ENCODE measurements at regions of chr7 and their contacts with region 1.

Region 1: GRCh38 chr7:117993377-117994003 is 120.2 kb upstream of the CTTNBP2 start:
- DNase-seq: peak; percentile 46
- H3K4me3 ChIP-seq: no peak overlapping the region
- H3K27ac ChIP-seq: no peak overlapping the region
- H3K4me1 ChIP-seq: peaks cover 26% of the 10 kb centered on the region
- H3K27me3 ChIP-seq: no peaks in the 10 kb centered on the region
- CTCF ChIP-seq: peak; percentile 60 to 82

Region 2: GRCh38 chr7:117750612-117751563 is 242.6 kb before region 1 on chr7:
- CTCF ChIA-PET with region 1: interaction called, 3 read pairs
- dilution Hi-C with region 1: no loop called
- in situ Hi-C with region 1: no loop called
- intact Hi-C with region 1: loop called (anchors 10 kb)
- DNase-seq: no peak
- H3K4me3 ChIP-seq: no peak overlapping the region
- H3K27ac ChIP-seq: no peak overlapping the region
- H3K4me1 ChIP-seq: no peaks in the 10 kb centered on the region
- H3K27me3 ChIP-seq: no peaks in the 10 kb centered on the region
- CTCF ChIP-seq: peak; percentile 46 to 67

Region 3: GRCh38 chr7:118080947-118081346 is 87.5 kb after region 1 on chr7:
- CTCF ChIA-PET with region 1: interaction called, 3 read pairs
- dilution Hi-C with region 1: no loop called
- in situ Hi-C with region 1: no loop called
- intact Hi-C with region 1: loop called (anchors 5 kb)
- DNase-seq: peak; percentile 96
- H3K4me3 ChIP-seq: no peak overlapping the region
- H3K27ac ChIP-seq: peak overlapping the region; percentile 92
- H3K4me1 ChIP-seq: peaks cover 45% of the 10 kb centered on the region
- H3K27me3 ChIP-seq: no peaks in the 10 kb centered on the region
- CTCF ChIP-seq: no peak

Region 4: DNA sequence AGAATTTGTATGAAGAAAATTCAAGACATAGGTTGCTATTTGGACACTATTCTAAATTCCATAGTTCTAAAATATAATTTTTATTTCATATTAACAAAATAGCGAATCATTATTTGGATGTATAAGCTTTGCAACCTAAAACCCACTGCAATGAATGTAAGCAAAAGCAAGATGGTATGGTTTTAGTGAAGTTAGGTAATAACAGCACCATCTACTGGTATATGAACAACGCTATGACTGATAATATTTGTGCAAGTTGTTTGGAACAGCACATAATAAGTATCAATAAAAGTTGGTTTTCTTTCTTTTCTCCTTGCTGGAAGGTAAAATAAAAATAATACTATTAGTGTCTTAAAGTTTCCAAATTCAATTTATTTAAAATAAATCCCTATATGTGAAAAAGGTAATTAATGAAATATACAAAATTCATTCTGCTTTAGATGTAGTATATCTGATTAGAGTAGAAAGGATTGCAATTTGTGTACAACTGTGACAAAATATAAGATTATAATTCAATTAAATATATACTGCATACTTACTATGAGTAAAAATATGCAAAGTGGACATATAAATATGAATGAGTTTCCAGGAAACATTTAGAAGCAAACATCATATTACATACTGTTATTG is 111.4 kb after region 1 on chr7:
- CTCF ChIA-PET with region 1: no interaction called
- dilution Hi-C with region 1: no loop called
- in situ Hi-C with region 1: no loop called
- intact Hi-C with region 1: loop called (anchors 1 kb)
- DNase-seq: peak; percentile 33
- H3K4me3 ChIP-seq: no peak overlapping the region
- H3K27ac ChIP-seq: no peak overlapping the region
- H3K4me1 ChIP-seq: no peaks in the 10 kb centered on the region
- H3K27me3 ChIP-seq: no peaks in the 10 kb centered on the region
- CTCF ChIP-seq: peak; percentile 61 to 70